ENCODE measurements at regions of chr16 and their contacts with region 1.

Region 1: DNA sequence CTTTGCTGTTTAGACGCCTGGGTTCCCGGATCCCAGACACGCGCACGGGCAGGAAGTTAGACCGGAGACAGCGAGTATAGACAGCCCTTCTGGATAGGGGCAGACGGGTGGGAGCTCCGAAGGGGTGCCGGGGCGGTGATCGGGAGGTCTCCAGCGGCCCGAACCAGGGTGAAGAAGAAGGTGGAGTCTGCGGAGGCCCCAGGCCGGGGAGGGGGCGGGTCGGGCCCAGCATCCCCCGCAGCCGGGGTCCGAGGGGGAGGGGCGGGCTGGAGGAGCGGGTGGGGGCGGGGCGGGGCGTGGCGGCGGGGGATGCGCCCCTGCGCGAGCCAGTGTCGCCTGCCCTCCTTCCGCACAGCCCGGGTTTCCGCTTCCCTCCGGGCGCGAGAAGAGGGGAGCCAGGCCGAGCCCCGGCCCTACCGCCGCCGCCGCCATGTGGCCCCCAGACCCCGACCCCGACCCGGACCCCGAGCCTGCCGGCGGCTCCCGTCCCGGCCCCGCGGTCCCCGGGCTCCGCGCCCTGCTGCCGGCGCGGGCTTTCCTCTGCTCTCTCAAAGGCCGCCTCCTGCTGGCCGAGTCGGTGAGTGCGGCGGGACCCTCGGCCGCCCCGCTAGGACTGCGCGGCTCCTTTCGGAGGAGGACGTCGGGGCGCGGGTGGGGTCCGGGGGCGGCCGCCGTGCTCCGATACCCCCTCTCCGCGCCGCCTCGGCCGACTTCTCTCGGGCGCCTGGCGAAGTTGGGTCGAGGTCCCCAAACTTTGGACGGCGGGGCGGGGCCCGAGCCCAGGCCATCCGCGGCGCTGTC is at the start of gene CMTM3:
- DNase-seq: peak; percentile 56 to 82 (median 72)
- ATAC-seq: peak; percentile 55 to 62
- H3K4me3 Mint-ChIP-seq: peak within 1 kb of the TSS; percentile 85 to 97 (median 93)
- H3K27ac Mint-ChIP-seq: peak within 1 kb of the TSS; percentile 91 to 97 (median 94)
- H3K4me1 Mint-ChIP-seq: peaks cover 22 to 62% (median 53%) of the 10 kb centered on the region in 4 donors
- H3K27me3 Mint-ChIP-seq: peaks cover 0 to 2% (median 0%) of the 10 kb centered on the region in 5 donors
- polyA plus RNA-seq, gene CMTM3: 76.1 to 81.3 (median 78.5) TPM

Region 2: DNA sequence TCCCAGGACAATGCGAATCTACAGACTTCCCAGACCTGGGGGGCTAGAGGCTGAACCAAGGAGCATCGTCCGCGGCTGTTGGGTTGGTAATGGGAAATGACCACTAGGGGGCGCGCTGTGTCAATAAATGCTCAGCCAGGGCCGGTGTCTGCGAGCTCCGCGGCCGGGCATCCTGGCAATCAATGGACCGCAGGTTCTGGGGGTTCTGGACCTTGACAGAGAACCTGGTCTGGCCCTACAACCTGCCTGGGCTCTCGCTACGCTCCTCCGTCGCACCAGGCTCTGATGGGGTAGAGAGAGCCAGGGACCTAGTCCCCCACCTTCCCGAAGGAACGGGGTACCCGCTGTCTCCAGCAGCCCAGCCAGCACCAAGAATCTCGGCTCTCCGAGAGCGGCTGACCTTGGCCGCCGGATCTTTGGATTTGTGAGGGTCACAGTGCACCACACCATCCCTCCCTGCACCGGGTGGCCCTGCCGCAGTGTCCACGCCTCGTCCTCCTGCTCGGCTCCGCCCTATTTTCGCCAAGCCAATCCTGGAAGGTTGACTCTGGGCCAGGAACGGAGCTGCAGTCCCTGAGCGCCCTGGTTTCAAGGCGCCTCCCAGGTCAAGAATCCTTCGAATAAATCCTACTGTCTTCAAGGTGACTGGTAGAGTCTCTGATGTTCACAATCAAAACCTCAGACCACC is 197.9 kb before region 1 on chr16:
- POLR2A ChIA-PET with region 1: interaction called, 24 read pairs
- DNase-seq: peak; percentile 69 to 92 (median 85)
- ATAC-seq: peak; percentile 74 to 84
- H3K4me3 Mint-ChIP-seq: peak overlapping the region; percentile 85 to 93 (median 88)
- H3K27ac Mint-ChIP-seq: peak overlapping the region; percentile 33 to 93 (median 82)
- H3K4me1 Mint-ChIP-seq: peaks cover 13 to 36% (median 26%) of the 10 kb centered on the region in 4 donors
- H3K27me3 Mint-ChIP-seq: peaks cover 0 to 13% (median 9%) of the 10 kb centered on the region in 5 donors

Region 3: GRCh38 chr16:66562407-66562806 is 42.2 kb before region 1 on chr16:
- POLR2A ChIA-PET with region 1: interaction called, 13 read pairs
- DNase-seq: peak in 3 of 10 donors; percentile 29 to 52 (median 38)
- ATAC-seq: peak in 1 of 2 donors; percentile 49
- H3K4me3 Mint-ChIP-seq: peak overlapping the region in 2 of 10 donors; percentile 38 to 43
- H3K27ac Mint-ChIP-seq: peak overlapping the region in 7 of 10 donors; percentile 18 to 81 (median 59)
- H3K4me1 Mint-ChIP-seq: peaks cover 15 to 57% (median 43%) of the 10 kb centered on the region in 4 donors
- H3K27me3 Mint-ChIP-seq: no peaks in the 10 kb centered on the region

Region 4: DNA sequence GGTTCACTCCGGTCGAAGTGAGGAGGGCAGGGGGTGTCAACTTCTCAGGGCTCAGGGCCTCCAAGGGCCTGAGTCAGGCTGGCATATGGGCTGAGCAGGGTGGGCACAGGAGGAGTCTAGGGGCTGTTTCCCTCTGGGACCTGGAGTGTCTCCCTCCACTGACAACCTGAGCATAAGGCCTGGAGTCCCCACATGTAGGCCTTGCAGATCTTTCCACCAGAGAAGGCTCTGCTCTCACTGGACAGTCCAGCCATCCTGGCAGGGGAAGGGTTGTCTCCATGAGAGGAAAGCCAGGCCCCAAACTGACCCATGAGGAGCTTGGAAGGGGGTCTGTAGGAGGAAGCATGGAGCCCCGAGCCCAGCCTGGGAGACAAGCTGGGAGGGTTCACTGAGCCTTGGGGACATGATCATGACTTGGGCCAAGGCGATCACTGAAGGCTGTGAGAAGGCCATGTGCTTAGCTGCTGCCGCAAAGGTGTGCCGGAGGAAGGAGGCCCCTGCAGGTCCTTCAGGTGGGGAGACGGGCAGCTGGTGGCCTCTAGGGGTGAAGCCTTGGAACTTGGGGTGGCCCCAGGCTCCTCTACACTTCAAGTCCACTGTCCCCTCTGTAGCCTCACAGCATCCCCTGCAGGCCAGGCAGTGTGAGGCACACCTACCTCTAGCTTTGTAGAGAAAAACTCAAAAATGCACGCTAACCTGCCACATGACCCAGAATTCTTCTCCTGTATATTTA is 15.4 kb before region 1 on chr16:
- POLR2A ChIA-PET with region 1: interaction called, 32 read pairs
- DNase-seq: peak; percentile 35 to 85 (median 56)
- ATAC-seq: peak; percentile 95
- H3K4me3 Mint-ChIP-seq: peak overlapping the region; percentile 77 to 91 (median 88)
- H3K27ac Mint-ChIP-seq: peak overlapping the region; percentile 18 to 91 (median 68)
- H3K4me1 Mint-ChIP-seq: peaks cover 13 to 45% (median 34%) of the 10 kb centered on the region in 4 donors
- H3K27me3 Mint-ChIP-seq: peaks cover 0 to 5% (median 0%) of the 10 kb centered on the region in 5 donors